Left ventricle myocardium inferior (tissue), 1 donor: ENCODE measurements at regions of chr6 and their contacts with region 1.

Region 1: DNA sequence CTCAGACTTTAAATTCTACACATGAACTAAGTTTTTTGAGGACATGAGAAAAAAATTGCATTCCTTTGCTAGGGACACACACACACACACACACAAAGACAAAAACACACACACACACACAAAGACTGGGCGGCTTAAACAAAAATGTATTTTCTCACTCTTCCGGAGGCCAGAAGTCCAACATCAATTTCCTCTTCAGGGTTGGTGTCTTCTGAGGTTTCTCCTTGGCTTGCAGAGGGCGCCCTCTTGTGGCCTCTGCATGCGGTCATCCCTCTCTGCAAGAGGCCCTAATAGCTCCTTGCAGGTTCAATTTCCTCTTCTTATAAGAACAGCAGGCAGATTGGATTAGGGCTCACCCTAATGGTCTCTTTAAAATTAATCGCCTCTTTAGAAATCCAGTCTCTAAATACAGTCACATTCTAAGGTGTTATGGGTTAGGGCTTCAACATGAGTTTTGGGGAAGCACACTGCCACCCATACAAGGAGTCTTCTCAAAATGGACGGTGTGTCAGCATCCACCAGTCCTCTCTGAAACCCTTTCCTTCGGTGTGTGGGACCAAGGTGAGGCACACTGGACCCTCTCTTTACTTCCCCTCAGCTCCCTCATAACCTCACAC is 61.4 kb downstream of the GPR6 start:
- DNase-seq: peak; percentile 82
- H3K4me3 ChIP-seq: peak overlapping the region; percentile 53
- H3K27ac ChIP-seq: no peak overlapping the region
- H3K4me1 ChIP-seq: peaks cover 14% of the 10 kb centered on the region
- H3K27me3 ChIP-seq: no peaks in the 10 kb centered on the region
- CTCF ChIP-seq: peak; percentile 92

Region 2: GRCh38 chr6:109579361-109579760 is 460.1 kb before region 1 on chr6:
- intact Hi-C with region 1: no loop called
- DNase-seq: no peak
- H3K4me3 ChIP-seq: no peak overlapping the region
- H3K27ac ChIP-seq: no peak overlapping the region
- H3K4me1 ChIP-seq: no peaks in the 10 kb centered on the region
- H3K27me3 ChIP-seq: no peaks in the 10 kb centered on the region
- CTCF ChIP-seq: no peak

Region 3: DNA sequence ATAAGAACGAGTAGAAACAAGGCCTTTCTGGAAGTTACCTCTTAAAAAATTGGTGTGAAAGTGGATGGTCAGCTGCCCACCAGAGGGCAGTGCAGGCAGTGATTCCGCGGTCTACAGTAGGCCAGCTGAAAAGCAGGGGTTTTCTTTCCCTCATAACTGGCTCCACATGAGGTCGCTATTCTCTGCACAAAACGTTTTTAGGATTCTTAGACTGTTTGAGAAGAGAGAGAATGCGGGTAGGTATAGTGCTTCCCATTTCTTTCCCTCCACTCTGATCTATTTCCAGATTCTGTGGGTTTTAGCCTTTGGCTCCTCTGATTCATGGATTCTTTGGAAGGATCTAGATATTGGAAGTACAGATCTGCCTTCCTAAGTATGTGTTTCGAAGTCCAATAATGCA is 334.2 kb before region 1 on chr6:
- intact Hi-C with region 1: loop called (anchors 5 kb)
- DNase-seq: peak; percentile 77
- H3K4me3 ChIP-seq: no peak overlapping the region
- H3K27ac ChIP-seq: no peak overlapping the region
- H3K4me1 ChIP-seq: peaks cover 25% of the 10 kb centered on the region
- H3K27me3 ChIP-seq: no peaks in the 10 kb centered on the region
- CTCF ChIP-seq: peak; percentile 99

Region 4: DNA sequence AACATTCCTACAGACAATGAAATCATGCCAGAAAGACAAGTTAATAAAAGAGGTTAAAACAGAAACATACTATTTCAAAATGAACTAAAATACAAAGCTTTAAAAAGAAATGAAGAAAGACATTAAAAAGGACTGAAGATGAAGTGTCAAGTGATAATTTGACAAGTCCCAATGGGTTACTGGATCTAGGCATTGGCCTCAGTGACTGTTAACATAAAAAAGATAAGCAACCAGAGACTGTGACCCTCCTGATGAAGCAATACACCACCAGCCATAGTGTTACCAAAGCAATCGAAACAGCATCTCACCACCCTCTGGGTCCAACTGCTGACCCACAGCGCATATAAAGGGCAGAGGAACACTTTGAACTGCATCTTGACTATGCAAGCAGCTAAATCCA is 218.0 kb before region 1 on chr6:
- intact Hi-C with region 1: no loop called
- DNase-seq: no peak
- H3K4me3 ChIP-seq: no peak overlapping the region
- H3K27ac ChIP-seq: no peak overlapping the region
- H3K4me1 ChIP-seq: peaks cover 10% of the 10 kb centered on the region
- H3K27me3 ChIP-seq: no peaks in the 10 kb centered on the region
- CTCF ChIP-seq: no peak

Region 5: DNA sequence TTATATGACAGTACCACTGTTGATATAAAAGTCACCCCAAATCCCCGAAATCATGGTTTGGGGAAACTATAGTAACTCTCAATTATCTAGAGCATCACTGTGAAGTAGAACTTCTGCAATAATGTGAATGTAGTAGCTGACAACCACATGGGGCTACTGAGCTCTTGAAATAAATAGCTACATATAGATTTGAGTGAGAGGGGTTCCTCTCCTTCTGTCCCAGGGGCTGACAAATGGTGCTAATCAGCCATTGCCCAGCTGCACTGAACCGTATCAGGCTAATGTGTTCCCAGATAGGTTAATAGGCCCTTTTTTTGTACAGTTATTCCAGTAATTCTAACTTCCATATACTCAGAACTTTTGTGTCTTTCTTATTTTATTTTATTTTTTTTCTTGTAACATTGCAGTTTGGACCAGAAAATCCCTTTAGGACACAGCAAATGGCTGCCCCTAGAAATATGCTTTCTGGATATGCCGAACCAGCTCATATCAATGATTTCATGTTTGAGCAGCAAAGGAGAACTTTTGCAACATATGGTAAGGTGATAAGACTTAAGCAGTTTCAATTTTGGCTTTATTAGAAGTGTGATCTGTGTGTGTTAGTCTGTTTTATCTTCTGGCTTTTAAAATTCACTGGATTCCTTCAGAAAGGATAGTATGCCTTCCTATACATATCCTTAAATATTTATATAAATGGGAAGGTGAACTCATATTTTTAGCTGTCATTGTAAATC is 161.8 kb after region 1 on chr6:
- intact Hi-C with region 1: no loop called
- DNase-seq: no peak
- H3K4me3 ChIP-seq: no peak overlapping the region
- H3K27ac ChIP-seq: no peak overlapping the region
- H3K4me1 ChIP-seq: peaks cover 5% of the 10 kb centered on the region
- H3K27me3 ChIP-seq: no peaks in the 10 kb centered on the region
- CTCF ChIP-seq: no peak